SK-N-SH (cell line): ENCODE measurements at regions of chr4 and their contacts with region 1.

Region 1: GRCh38 chr4:53674903-53675302 is 83.6 kb upstream of the LNX1 start:
- DNase-seq: no peak
- H3K4me3 ChIP-seq: no peak overlapping the region
- H3K27ac ChIP-seq: no peak overlapping the region
- H3K4me1 ChIP-seq: no peaks in the 10 kb centered on the region
- H3K27me3 ChIP-seq: no peaks in the 10 kb centered on the region
- CTCF ChIP-seq: no peak
- EP300 ChIP-seq: no peak
- RAD21 ChIP-seq: no peak

Region 2: DNA sequence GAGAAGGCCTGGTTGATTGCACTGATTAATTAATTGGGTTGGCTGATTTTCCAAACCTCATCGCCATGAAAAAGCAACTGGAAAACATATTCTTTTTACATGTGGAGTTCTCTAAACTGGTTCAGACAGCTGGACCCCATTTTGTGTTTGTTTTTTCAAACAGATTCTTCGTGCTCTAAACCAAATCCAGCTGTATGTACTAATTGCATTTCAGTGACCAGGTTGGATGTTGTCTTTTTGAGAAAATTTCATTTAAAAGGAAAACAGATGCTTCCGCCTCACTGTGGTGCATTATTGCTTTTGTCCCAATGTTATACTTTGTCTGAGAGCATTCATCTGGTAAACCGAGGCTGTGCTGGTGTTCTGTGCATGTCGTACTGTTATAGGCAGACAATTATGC is 15.8 kb before region 1 on chr4:
- CTCF ChIA-PET with region 1: interaction called, 11 read pairs
- POLR2A ChIA-PET with region 1: no interaction called
- DNase-seq: peak; percentile 9
- H3K4me3 ChIP-seq: no peak overlapping the region
- H3K27ac ChIP-seq: peak overlapping the region in 1 of 2 experiments; percentile 84; a peak in 2 of 4 replicates
- H3K4me1 ChIP-seq: peaks cover 8 to 13% of the 10 kb centered on the region in 2 experiments; a peak in 2 of 4 replicates
- H3K27me3 ChIP-seq: no peaks in the 10 kb centered on the region
- CTCF ChIP-seq: no peak
- EP300 ChIP-seq: peak in 1 of 2 experiments; percentile 53; a peak in 1 of 4 replicates
- RAD21 ChIP-seq: no peak